ENCODE measurements at regions of chr3 and their contacts with region 1.

Region 1: GRCh38 chr3:45938864-45939263 is 4.4 kb upstream of the CXCR6 start:
- DNase-seq: peak; percentile 86 to 92
- ATAC-seq: peak; percentile 92
- H3K4me3 ChIP-seq: no peak overlapping the region
- H3K27ac ChIP-seq: peak overlapping the region in 1 of 2 donors; percentile 15
- H3K4me1 ChIP-seq: no peaks in the 10 kb centered on the region
- H3K27me3 ChIP-seq: no peaks in the 10 kb centered on the region

Region 2: GRCh38 chr3:45968706-45969105 is 29.8 kb after region 1 on chr3:
- intact Hi-C with region 1: loop called in 1 of 2 experiments (anchors 2 kb)
- DNase-seq: no peak
- ATAC-seq: no peak
- H3K4me3 ChIP-seq: no peak overlapping the region
- H3K27ac ChIP-seq: no peak overlapping the region
- H3K4me1 ChIP-seq: peaks cover 0 to 3% of the 10 kb centered on the region in 2 donors
- H3K27me3 ChIP-seq: no peaks in the 10 kb centered on the region

Region 3: GRCh38 chr3:46143951-46144473 is 205.1 kb after region 1 on chr3:
- intact Hi-C with region 1: no loop called
- DNase-seq: peak in 1 of 2 donors; percentile 67
- ATAC-seq: no peak
- H3K4me3 ChIP-seq: no peak overlapping the region
- H3K27ac ChIP-seq: no peak overlapping the region
- H3K4me1 ChIP-seq: no peaks in the 10 kb centered on the region
- H3K27me3 ChIP-seq: no peaks in the 10 kb centered on the region

Measured in aorta (tissue), 5 donors.